ENCODE measurements at regions of chr10 and their contacts with region 1.

Region 1: GRCh38 chr10:75718991-75719390 is 287.6 kb downstream of the LRMDA start:
- H3K4me3 ChIP-seq: no peak overlapping the region
- H3K27ac ChIP-seq: no peak overlapping the region
- H3K4me1 ChIP-seq: no peaks in the 10 kb centered on the region
- CTCF ChIP-seq: no peak

Region 2: GRCh38 chr10:75424571-75424970 is 294.4 kb before region 1 on chr10:
- CTCF ChIA-PET with region 1: interaction called, 10 read pairs
- POLR2A ChIA-PET with region 1: no interaction called
- H3K4me3 ChIP-seq: no peak overlapping the region
- H3K27ac ChIP-seq: no peak overlapping the region; the same call in 1 of the 2 replicates
- H3K4me1 ChIP-seq: 0 out of 2 replicates have a peak, but pooled peaks cover 10% of the 10 kb centered on the region
- CTCF ChIP-seq: no peak

Measured in HEK293 (cell line).